ENCODE measurements at regions of chr1 and their contacts with region 1.

Region 1: DNA sequence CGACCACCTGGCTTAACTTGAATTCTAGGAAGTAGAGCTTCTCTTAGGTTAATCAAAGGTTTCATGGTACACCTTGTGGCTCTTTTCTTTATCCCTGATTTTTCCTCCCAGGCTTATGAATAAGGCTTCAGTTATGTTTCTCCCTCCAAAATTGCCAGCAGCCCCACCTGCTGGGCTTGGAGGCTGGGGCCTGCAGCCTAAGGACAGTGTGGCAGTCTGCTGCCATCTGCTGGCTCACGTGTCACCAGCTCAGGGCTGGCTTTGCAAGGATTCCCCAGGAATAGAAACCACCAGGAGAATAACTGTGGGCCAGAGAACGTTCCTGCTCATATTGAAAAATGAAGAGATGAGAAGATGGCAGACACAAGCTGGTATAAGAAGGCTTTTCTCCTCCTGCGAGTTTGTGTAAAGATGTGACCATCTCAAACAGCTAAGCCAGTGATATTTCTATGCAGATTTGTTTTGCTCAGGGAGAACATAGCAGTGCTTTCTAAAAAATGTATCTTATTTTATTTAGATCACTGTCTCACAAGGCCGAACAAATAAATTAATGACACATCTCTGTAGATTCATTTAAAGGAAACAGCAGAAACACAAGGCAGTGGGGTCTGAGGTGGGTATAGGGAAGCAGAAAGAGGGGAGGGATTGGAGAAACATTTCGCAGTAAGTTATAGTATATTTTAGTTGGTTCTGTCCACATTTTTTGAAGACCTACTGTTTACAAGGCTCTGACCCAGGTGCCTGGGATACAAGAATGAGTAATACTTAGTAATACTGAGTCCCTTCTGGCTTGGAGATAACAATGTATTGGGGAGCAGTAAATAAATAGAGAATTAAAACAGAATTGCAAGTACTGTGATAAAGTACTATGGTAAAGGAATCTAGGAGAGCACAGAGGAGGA is 291.1 kb upstream of the SGIP1 start:
- DNase-seq: peak; percentile 91

Region 2: DNA sequence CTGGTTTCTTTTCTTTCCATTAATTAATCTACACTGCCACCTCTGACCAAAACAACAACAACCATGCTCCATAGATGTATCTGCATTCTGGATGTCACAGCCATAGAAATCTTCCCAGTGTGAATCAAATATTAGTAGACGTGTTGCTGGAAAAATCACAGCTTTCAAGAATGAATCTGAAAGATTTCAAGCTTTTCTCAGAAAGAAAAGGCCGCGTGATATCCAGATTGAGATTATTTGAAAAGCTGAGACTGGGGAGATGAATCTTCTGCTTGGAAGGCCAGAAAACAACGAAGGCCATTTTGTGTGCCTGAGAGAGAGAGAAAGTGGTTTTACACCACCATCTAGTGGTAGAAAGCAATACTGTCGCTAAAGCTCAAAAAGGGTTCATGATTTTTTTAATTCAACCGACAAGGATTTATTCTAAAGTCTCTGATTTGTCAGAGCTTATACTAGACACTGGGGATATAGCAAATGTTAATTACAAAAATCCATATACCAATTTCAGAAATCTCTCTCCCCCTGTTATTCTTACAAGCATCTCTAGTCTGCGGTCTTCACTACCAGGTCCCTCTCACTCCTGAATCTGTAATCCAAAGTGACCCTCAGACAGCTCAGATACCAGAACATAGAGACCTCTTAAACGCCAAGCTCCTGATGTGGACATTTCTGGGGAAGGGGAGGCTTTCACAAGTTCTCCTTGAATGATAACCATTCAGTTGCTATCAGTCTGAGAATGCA is 203.5 kb after region 1 on chr1:
- in situ Hi-C with region 1: loop called (anchors 25 kb)
- DNase-seq: peak; percentile 79